Panc1 (cell line): ENCODE measurements at regions of chr7 and their contacts with region 1.

Region 1: DNA sequence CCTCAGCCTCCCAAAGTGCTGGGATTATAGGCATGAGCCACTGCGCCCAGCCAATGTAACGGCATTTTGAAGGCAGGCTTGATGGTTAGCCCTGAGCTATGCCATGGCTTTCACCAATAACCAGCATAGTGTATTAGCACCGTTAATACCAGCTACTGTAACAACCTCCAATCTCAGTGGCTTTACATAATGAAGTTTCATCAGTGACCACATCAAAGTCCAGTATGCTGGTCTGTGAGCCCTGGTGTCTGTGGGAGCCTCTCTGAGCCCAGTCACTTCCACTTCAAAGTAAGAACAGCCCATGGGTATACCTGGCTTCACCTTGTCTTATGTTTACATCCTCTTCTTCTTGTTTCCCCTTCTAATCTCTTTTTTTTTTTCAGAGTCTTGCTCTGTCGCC is 11.6 kb upstream of the ZDHHC4 start:
- DNase-seq: no peak
- ATAC-seq: no peak
- H3K4me3 ChIP-seq: no peak overlapping the region
- H3K27ac ChIP-seq: no peak overlapping the region
- H3K4me1 ChIP-seq: no peaks in the 10 kb centered on the region
- H3K27me3 ChIP-seq: no peaks in the 10 kb centered on the region
- CTCF ChIP-seq: no peak

Region 2: GRCh38 chr7:5636914-5637313 is 928.7 kb before region 1 on chr7:
- CTCF ChIA-PET with region 1: no interaction called
- POLR2A ChIA-PET with region 1: no interaction called
- in situ Hi-C with region 1: no loop called
- intact Hi-C with region 1: no loop called
- DNase-seq: no peak
- ATAC-seq: no peak
- H3K4me3 ChIP-seq: no peak overlapping the region
- H3K27ac ChIP-seq: no peak overlapping the region
- H3K4me1 ChIP-seq: no peaks in the 10 kb centered on the region
- H3K27me3 ChIP-seq: no peaks in the 10 kb centered on the region
- CTCF ChIP-seq: no peak

Region 3: GRCh38 chr7:5797716-5798115 is 767.9 kb before region 1 on chr7:
- CTCF ChIA-PET with region 1: no interaction called
- POLR2A ChIA-PET with region 1: no interaction called
- in situ Hi-C with region 1: no loop called
- intact Hi-C with region 1: no loop called
- DNase-seq: no peak
- ATAC-seq: no peak
- H3K4me3 ChIP-seq: no peak overlapping the region
- H3K27ac ChIP-seq: no peak overlapping the region
- H3K4me1 ChIP-seq: no peaks in the 10 kb centered on the region
- H3K27me3 ChIP-seq: no peaks in the 10 kb centered on the region
- CTCF ChIP-seq: no peak

Region 4: GRCh38 chr7:7257899-7258692 is 692.4 kb after region 1 on chr7:
- CTCF ChIA-PET with region 1: no interaction called
- POLR2A ChIA-PET with region 1: interaction called, 13 read pairs
- in situ Hi-C with region 1: no loop called
- intact Hi-C with region 1: no loop called
- DNase-seq: no peak
- ATAC-seq: no peak
- H3K4me3 ChIP-seq: no peak overlapping the region
- H3K27ac ChIP-seq: no peak overlapping the region
- H3K4me1 ChIP-seq: no peaks in the 10 kb centered on the region
- H3K27me3 ChIP-seq: no peaks in the 10 kb centered on the region
- CTCF ChIP-seq: no peak